ENCODE measurements at regions of chr6 and their contacts with region 1.

Region 1: DNA sequence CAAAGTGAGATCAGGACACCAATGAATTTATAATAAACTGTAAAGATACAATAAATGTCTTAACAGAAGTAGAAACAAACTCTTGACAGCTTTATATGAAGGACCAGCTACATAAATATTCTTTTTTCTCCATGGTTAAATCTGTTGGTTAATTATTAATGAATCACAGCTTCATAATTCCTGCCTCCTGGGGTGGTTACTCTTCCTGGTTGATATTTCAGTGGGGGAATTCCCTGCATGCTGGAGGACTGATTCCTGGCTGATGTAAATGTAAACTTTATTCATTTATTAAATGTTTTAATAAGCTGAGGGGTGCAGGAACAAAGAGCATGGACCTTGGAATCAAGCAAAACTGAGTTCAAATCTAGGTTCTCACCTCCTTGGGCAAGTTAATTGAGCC is 16.2 kb upstream of the RCAN2 start:
- DNase-seq: no peak
- ATAC-seq: no peak

Region 2: DNA sequence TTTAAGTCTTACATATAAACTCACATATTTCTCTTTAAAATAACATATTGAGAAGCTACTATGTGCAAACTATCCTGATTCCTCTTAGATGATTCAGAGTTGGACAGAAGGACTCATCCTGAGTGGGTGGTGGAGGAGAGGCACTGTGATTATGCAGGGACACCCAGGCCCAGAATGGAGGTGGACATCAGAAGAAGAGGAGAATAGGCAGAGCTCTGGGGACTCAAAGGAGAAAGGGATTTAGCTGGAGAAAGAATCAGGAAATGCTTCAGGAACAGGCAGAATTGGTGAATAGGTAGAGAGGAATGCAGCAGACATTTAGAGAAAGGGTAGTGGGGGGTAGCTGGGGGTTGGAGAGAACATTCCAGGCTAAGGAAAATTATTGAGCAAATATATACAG is 33.5 kb before region 1 on chr6:
- intact Hi-C with region 1: no loop called
- DNase-seq: no peak
- ATAC-seq: no peak

Region 3: GRCh38 chr6:46491628-46492547 is 15.5 kb before region 1 on chr6:
- intact Hi-C with region 1: loop called (anchors 2 kb)
- DNase-seq: peak; percentile 76
- ATAC-seq: peak; percentile 91

Region 4: DNA sequence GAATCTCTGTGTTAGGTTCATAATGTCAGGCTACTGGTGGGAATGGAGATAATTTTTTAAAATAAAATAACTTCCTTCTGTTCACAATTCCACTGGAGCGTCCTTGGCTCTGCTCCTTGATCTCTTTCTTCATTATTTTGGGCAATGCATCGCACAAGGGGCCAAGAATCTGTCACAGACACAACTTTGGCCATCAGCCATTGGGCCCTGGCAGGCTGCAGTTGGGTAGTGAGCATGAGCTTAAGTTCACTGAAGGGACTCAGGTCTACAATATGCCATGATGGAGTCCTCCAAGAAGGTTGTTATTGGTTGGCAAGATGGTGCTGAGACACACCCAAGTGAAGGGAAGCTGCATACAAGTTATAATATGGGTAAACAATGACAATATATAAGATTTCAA is 105.2 kb after region 1 on chr6:
- intact Hi-C with region 1: loop called (anchors 5 kb)
- DNase-seq: no peak
- ATAC-seq: peak; percentile 57

Measured in Right ventricle myocardium inferior (tissue), 1 donor.